Panc1 (cell line): ENCODE measurements at regions of chr1 and their contacts with region 1.

Region 1: GRCh38 chr1:82472489-82473131 is 671.9 kb downstream of the ADGRL2 start:
- DNase-seq: no peak
- ATAC-seq: no peak
- H3K4me3 ChIP-seq: no peak overlapping the region
- H3K27ac ChIP-seq: no peak overlapping the region
- H3K4me1 ChIP-seq: no peaks in the 10 kb centered on the region
- H3K27me3 ChIP-seq: no peaks in the 10 kb centered on the region
- CTCF ChIP-seq: no peak

Region 2: DNA sequence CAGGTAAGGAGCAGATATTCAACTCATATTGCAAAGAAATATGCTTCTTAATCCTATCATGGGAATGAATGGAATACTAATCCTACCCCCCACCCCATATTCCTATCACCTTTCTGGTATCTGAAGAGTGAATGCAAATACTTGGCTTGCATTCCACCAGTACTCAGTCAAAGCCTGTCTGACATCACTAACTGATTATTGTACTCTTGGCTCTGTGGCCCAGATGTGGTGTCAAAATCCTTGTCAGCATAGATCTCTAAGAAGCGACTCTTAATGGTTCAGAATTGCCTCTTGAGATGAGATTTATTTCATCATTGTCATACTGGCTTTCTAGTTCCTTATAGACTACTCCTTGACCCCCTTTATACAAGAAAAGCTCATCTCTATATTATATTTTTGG is 67.3 kb before region 1 on chr1:
- CTCF ChIA-PET with region 1: no interaction called
- POLR2A ChIA-PET with region 1: no interaction called
- in situ Hi-C with region 1: loop called (anchors 5 kb)
- intact Hi-C with region 1: no loop called
- DNase-seq: no peak
- ATAC-seq: no peak
- H3K4me3 ChIP-seq: no peak overlapping the region
- H3K27ac ChIP-seq: no peak overlapping the region
- H3K4me1 ChIP-seq: no peaks in the 10 kb centered on the region
- H3K27me3 ChIP-seq: no peaks in the 10 kb centered on the region
- CTCF ChIP-seq: no peak

Region 3: GRCh38 chr1:82491301-82492048 is 18.9 kb after region 1 on chr1:
- CTCF ChIA-PET with region 1: no interaction called
- POLR2A ChIA-PET with region 1: no interaction called
- in situ Hi-C with region 1: no loop called
- intact Hi-C with region 1: no loop called
- DNase-seq: no peak
- ATAC-seq: no peak
- H3K4me3 ChIP-seq: no peak overlapping the region
- H3K27ac ChIP-seq: no peak overlapping the region
- H3K4me1 ChIP-seq: no peaks in the 10 kb centered on the region
- H3K27me3 ChIP-seq: no peaks in the 10 kb centered on the region
- CTCF ChIP-seq: no peak

Region 4: GRCh38 chr1:82503822-82504221 is 31.2 kb after region 1 on chr1:
- CTCF ChIA-PET with region 1: no interaction called
- POLR2A ChIA-PET with region 1: no interaction called
- in situ Hi-C with region 1: no loop called
- intact Hi-C with region 1: no loop called
- DNase-seq: no peak
- ATAC-seq: no peak
- H3K4me3 ChIP-seq: no peak overlapping the region
- H3K27ac ChIP-seq: no peak overlapping the region
- H3K4me1 ChIP-seq: no peaks in the 10 kb centered on the region
- H3K27me3 ChIP-seq: no peaks in the 10 kb centered on the region
- CTCF ChIP-seq: no peak